Ascending aorta (tissue), 2 donors: ENCODE measurements at regions of chr22 and their contacts with region 1.

Region 1: DNA sequence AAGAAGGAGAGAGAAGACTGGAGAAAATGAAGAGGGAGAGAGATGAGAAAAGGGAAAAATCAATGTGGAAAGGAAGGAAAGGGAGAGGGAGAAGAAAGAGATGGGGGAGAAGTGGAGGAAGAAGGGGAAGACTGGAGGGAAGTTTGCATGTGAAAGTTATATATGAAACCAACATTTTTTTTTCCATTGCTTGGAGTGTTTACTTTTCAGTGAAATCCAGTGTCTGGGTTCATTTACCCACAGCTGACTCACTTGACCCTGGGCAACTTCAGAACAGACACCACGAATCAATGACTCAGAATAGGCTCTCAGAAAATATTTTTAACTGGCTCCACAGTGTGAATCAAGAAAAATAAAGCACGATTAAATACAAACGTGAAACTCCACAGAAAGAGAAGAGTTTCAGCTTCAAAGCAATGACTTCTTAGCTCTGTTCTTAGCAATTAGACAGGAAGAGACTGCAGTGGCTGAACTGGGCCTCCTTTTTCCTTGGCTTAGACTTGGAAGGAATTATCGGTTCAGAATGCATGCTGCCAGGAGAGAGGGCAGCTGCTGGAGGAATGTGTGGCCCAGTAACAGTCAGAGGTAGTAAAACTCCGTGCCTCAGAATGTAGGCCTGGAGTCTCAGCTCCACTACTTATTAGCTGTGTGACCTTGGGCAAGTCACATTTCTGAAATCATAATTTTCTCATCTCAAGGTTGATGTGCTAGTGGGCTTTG is 237.5 kb downstream of the MIAT start:
- DNase-seq: peak in 1 of 2 donors; percentile 76
- H3K4me3 ChIP-seq: no peak overlapping the region
- H3K27ac ChIP-seq: peak overlapping the region; percentile 84 to 87
- H3K4me1 ChIP-seq: peaks cover 22 to 46% of the 10 kb centered on the region in 2 donors
- H3K27me3 ChIP-seq: no peaks in the 10 kb centered on the region
- CTCF ChIP-seq: no peak

Region 2: GRCh38 chr22:26981541-26981940 is 86.6 kb after region 1 on chr22:
- intact Hi-C with region 1: loop called (anchors 5 kb)
- DNase-seq: peak in 1 of 2 donors; percentile 71
- H3K4me3 ChIP-seq: peak overlapping the region in 1 of 2 donors; percentile 5
- H3K27ac ChIP-seq: peak overlapping the region; percentile 36 to 37
- H3K4me1 ChIP-seq: peaks cover 0 to 16% of the 10 kb centered on the region in 2 donors
- H3K27me3 ChIP-seq: no peaks in the 10 kb centered on the region
- CTCF ChIP-seq: no peak

Region 3: DNA sequence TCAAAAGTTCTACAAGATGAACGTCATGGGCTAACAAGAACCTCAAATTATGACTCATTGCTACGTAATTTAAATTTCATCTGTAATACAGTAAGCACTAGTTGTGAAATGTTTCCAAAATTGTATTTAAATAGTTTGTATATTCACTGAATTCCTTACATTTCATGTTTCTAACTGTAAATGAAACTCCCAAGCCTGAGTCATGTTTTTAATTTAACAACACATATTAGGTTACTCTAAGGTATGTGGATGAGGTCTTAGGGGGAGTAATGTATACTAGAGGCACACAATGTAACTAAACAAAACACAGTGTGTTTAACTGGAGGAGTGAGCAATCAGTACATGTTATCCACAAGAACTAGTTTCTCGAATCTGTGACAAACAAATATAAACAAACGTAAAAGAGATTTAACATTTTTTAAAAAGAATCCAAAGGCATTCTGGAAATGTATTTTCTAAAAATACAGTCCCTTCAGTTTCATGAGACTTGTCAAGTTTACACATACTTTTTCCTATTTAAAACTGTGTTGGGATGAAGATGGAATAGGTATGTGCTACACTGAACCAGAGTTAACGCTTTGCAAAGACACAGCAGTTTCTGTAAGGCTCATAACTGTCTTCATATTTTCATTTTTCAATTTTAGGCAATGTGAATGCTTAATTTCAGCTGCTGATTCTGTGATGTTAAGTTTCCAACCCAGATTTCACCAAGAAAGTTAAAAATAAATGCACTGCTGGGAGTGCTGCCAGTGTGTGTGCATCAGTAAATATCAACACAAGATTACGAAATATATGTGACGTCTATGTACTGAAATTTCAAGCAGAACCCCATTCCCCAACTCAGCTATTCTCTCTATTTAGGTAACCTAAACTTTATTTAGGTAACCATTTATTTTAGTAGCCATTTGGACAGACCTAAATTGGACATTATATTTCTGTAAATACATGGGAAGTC is 971.5 kb after region 1 on chr22:
- intact Hi-C with region 1: loop called (anchors 10 kb)
- DNase-seq: no peak
- H3K4me3 ChIP-seq: no peak overlapping the region
- H3K27ac ChIP-seq: peak overlapping the region; percentile 82 to 86
- H3K4me1 ChIP-seq: peaks cover 4 to 46% of the 10 kb centered on the region in 2 donors
- H3K27me3 ChIP-seq: no peaks in the 10 kb centered on the region
- CTCF ChIP-seq: no peak